H1 (cell line): ENCODE measurements at regions of chr13 and their contacts with region 1.

Region 1: DNA sequence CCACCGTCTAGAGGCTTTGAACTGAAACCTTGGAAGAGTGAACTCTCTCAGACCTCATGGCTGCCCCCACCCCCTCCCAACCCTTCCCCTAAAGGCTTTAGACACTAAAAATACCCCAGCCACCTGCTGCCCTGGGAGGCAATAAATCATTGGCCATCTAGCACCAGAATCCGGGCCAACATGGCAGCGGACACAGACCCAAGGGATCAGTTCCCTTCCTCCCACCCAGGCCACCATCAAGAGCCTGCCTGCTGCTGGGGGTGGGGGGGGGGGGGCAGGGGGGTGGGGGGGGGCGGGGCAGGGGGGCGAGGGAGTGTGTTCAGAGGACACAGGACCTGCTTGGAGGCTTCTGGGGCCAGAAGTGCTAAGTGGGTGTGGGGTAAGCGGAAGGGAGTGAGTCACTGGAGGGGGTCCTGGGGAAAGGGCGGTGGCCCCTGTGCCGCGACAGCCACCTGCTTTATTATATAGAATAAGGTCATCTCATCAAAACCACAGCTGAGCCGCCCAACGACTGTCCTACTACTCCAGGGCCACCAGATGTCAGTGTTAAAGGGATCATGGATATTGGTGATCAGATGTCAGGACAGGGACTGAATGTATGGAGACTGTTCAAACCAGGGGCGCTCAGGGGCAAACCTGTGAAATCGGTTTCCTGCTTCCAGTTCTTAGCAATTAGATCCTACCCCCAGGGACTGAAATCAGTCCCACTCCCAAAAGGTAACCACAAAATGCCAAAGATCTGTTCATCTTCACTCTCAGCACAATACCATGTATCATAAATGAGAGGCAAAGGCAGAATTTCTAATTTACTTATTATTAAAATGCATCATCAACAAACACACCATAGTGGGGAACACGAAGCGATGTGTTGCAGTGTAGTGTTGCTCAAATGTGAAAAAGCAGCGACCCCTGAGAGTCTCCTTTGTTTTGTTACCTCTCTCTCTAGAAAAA is 24.3 kb downstream of the ARL11 start:
- DNase-seq: peak in 1 of 2 experiments; percentile 52
- H3K4me3 ChIP-seq: no peak overlapping the region
- H3K27ac ChIP-seq: no peak overlapping the region
- H3K4me1 ChIP-seq: no peaks in the 10 kb centered on the region
- H3K27me3 ChIP-seq: no peaks in the 10 kb centered on the region
- CTCF ChIP-seq: peak; percentile 50 to 74 (median 55)
- EP300 ChIP-seq: no peak
- POLR2A ChIP-seq: no peak
- RAD21 ChIP-seq: peak; percentile 70 to 74

Region 2: DNA sequence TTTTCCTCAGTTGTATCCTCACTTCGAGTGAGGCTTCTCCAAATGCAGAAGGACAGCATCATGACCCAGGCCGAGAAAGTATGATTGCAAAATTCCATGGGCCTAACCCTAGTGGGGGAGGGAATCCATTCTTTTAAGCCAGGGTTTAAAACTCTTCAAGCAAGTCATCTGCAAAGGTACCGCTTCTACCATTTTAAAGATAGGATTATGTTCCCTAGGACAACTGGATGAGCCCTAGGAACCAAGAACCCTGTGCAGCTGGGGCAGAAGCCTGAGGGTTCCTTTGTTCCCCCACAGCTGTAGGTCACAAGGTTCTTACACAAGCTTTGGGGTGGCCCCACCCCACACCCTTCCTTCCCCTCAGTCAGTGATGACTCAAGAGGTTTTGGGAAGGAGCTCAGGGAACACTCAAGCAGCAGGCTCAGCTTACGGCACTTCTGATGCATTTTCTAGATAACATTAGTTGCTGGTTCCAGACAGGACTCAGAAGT is 10.8 kb before region 1 on chr13:
- CTCF ChIA-PET with region 1: interaction called, 16 read pairs
- POLR2A ChIA-PET with region 1: interaction called, 3 read pairs
- DNase-seq: no peak
- H3K4me3 ChIP-seq: no peak overlapping the region
- H3K27ac ChIP-seq: no peak overlapping the region
- H3K4me1 ChIP-seq: peaks cover 0 to 1% (median 0%) of the 10 kb centered on the region in 4 experiments; a peak in 1 of 7 replicates
- H3K27me3 ChIP-seq: no peaks in the 10 kb centered on the region
- CTCF ChIP-seq: no peak
- EP300 ChIP-seq: no peak
- POLR2A ChIP-seq: no peak
- RAD21 ChIP-seq: no peak

Region 3: DNA sequence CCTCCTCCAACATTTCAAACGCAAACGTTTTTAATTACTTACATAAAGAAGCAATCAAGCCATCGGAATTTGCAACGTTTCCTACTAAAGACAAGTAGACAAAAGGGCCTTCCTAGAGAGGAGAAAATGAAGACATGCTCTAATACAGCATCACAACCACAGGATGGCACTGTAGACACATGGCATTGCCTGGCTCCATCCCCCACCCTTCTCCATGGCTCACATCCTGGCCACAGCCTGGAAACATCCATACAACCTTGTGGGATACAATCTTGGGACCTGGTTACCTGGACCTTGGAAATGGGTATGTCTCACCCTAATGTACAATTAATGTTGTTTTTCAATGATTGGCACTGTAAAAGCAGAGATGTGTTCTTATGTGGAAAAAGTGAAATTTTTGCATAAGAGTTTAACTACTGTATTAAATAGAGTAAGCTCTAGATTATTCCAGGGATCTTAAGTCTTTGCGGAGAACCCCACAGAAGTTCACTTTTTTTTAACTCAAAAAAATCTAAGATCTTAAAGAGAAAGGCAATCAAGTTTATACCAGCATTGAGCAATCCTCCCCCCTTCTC is 17.2 kb after region 1 on chr13:
- CTCF ChIA-PET with region 1: interaction called, 16 read pairs
- POLR2A ChIA-PET with region 1: no interaction called
- DNase-seq: peak in 1 of 2 experiments; percentile 57
- H3K4me3 ChIP-seq: no peak overlapping the region
- H3K27ac ChIP-seq: no peak overlapping the region
- H3K4me1 ChIP-seq: peaks cover 0 to 8% (median 0%) of the 10 kb centered on the region in 4 experiments; a peak in 2 of 7 replicates
- H3K27me3 ChIP-seq: no peaks in the 10 kb centered on the region
- CTCF ChIP-seq: peak; percentile 75 to 88 (median 84)
- EP300 ChIP-seq: no peak
- POLR2A ChIP-seq: no peak
- RAD21 ChIP-seq: peak; percentile 92 to 97